ENCODE measurements at regions of chr12 and their contacts with region 1.

Region 1: GRCh38 chr12:75712252-75712651 is 200.8 kb upstream of the KRR1 start:
- DNase-seq: no peak
- H3K4me3 Mint-ChIP-seq: no peak overlapping the region
- H3K27ac Mint-ChIP-seq: no peak overlapping the region
- H3K4me1 Mint-ChIP-seq: peaks cover 26% of the 10 kb centered on the region
- H3K27me3 Mint-ChIP-seq: peaks cover 12% of the 10 kb centered on the region

Region 2: DNA sequence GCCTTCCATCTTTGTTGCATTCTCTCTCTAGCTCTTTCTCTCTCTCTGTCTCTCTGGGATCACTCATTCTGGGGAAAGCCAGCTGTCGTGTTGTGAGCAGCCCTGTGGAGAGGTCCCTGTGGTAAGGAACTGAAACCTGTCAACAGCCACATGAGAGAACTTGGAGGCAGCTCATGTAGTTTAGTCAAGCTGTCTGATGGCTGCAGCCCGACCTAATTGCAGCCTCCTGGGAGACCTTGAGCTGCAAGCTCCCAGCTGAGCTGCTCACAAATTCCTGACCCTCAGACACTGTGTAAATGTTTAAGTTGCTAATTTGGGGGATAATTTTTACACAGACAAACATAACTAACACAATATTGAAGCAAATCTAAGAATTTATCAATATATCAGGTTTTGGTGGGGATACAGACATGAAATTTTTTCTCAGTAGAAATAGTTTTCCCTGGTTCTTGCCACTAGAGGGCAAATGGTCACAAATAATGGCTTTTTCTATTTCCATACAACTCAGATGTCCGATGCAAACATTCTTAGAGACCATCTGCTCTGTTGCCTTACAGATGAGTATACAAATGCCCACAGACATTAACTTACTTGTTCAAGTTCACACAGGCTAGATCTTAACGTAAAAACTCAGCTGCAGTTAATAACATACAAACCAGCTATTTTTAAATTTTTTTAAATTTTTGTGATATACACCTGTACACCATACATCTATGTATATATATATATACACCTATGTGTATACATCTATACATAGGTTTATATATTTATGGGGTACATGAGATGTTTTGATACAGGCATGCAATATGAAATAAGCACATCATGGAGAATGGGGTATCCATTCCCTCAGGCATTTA is 185.4 kb before region 1 on chr12:
- intact Hi-C with region 1: loop called (anchors 5 kb)
- DNase-seq: no peak
- H3K4me3 Mint-ChIP-seq: no peak overlapping the region
- H3K27ac Mint-ChIP-seq: no peak overlapping the region
- H3K4me1 Mint-ChIP-seq: peaks cover 12% of the 10 kb centered on the region
- H3K27me3 Mint-ChIP-seq: peaks cover 42% of the 10 kb centered on the region

Region 3: DNA sequence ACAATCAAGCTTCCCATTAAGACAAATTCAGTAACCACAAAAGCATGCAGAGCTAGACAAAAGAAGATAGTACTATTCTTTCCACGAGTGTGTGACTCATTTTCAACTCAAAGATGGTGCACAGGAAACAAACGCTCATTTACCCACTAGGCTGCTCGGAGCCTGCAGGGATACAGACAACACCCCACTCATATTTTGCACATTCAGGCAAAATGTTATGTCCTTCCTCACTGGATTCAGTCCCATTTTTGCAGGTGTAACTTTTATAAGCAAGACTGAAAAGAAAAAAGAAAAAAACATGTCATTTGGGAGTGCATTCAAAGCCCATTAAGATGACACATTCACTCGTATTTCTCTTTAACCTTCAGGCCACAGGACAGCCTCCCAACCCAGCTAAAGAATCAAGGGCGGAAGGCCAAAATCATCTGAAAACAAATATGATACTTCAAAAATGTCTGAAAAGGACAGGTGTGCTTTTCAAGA is 53.3 kb before region 1 on chr12:
- intact Hi-C with region 1: loop called (anchors 5 kb)
- DNase-seq: peak; percentile 9
- H3K4me3 Mint-ChIP-seq: no peak overlapping the region
- H3K27ac Mint-ChIP-seq: peak overlapping the region; percentile 5
- H3K4me1 Mint-ChIP-seq: peaks cover 34% of the 10 kb centered on the region
- H3K27me3 Mint-ChIP-seq: peaks cover 6% of the 10 kb centered on the region

Region 4: DNA sequence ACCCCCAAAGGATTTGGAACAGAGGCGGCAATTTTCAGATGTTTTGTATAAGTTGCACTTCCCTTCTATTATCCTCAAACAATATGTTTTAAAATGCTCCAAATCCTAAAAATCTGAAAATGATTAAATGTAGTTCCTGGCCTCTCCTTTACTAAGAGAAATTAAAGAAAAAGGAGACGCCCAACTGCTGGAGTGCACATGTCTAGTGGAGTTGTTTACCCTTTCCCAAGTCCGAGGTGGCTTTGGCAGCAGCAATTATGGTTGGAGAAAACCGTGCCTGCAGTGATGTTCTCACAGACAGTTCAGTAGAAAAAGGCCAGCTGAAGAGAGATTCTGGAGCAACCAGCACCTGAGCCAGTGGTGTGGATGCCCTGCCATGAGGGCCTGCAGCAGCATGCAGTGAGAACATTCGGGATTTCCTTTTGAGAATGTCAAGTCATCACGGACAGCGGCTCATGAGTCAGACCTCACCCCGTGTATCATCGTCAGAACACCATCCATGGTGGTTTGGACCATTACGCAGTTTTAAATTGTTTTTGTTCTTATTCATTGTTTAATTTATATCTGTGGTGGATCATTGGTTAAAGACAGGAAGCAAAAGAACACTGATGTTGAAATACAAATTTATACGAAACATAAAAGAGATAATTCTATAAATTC is 21.8 kb before region 1 on chr12:
- intact Hi-C with region 1: no loop called
- DNase-seq: no peak
- H3K4me3 Mint-ChIP-seq: no peak overlapping the region
- H3K27ac Mint-ChIP-seq: no peak overlapping the region
- H3K4me1 Mint-ChIP-seq: no peaks in the 10 kb centered on the region
- H3K27me3 Mint-ChIP-seq: peaks cover 30% of the 10 kb centered on the region

Region 5: GRCh38 chr12:75790219-75790618 is 78.0 kb after region 1 on chr12:
- intact Hi-C with region 1: loop called (anchors 1 kb)
- DNase-seq: no peak
- H3K4me3 Mint-ChIP-seq: no peak overlapping the region
- H3K27ac Mint-ChIP-seq: no peak overlapping the region
- H3K4me1 Mint-ChIP-seq: peaks cover 16% of the 10 kb centered on the region
- H3K27me3 Mint-ChIP-seq: peaks cover 21% of the 10 kb centered on the region

Region 6: GRCh38 chr12:75831402-75831801 is 119.2 kb after region 1 on chr12:
- intact Hi-C with region 1: no loop called
- DNase-seq: no peak
- H3K4me3 Mint-ChIP-seq: no peak overlapping the region
- H3K27ac Mint-ChIP-seq: no peak overlapping the region
- H3K4me1 Mint-ChIP-seq: no peaks in the 10 kb centered on the region
- H3K27me3 Mint-ChIP-seq: peaks cover 21% of the 10 kb centered on the region

Region 7: DNA sequence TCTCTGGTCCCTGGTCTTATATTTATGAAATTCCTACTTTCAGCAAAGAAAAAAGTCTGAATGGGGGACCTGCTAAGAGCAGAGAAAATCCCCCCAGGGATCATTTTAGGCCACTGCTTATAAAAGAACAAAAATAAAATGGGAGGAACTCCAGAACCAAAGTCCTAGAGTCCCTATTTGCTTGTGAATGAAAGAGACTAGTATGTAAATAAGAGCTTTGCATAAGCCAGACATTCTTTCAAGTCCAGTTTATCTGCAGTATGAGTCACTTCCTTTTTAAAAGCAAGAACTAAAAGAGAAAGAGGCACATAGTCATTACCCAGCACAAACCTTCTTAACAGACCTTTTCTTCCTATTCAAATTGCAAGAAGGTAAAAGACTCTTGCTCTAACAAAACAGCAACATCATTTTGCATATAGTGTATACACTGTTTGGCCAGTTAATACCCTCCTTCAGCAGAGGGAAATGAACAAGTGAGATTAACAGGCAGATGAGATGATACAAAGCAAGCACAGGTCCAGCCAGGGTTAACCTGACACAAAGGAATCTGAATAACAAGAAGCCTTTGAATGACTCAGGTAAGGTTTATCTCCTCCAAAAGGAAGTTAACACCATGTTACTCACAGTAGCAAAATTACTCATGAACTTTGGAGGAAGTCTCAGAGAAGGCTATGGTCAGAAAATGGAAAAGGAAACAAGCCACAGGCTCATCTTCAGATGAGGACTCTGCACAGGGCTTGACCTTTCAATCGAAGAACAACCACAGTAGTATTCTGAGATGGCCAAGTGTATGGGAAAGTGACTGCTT is 232.0 kb after region 1 on chr12:
- intact Hi-C with region 1: loop called (anchors 2 kb)
- DNase-seq: no peak
- H3K4me3 Mint-ChIP-seq: peak overlapping the region; percentile 52
- H3K27ac Mint-ChIP-seq: peak overlapping the region; percentile 97
- H3K4me1 Mint-ChIP-seq: peaks cover 32% of the 10 kb centered on the region
- H3K27me3 Mint-ChIP-seq: no peaks in the 10 kb centered on the region

Measured in activated T-helper 2 cell treated with anti-CD3 and anti-CD28 coated beads, Interferon-gamma antibody, Interleukin-2, Interleukin-4, amounts not matched to agents 10 μg/mL and 5 μg/mL and 100 μg/mL, durations not matched to agents 14 hours and 24 hours and 36 hours (primary cell).